ENCODE measurements at regions of chr1 and their contacts with region 1.

Region 1: GRCh38 chr1:39196244-39197215 is 8.0 kb upstream of the MACF1 start:
- DNase-seq: no peak
- ATAC-seq: no peak
- H3K4me3 ChIP-seq: no peak overlapping the region
- H3K27ac ChIP-seq: no peak overlapping the region
- H3K4me1 ChIP-seq: peaks cover 35% of the 10 kb centered on the region
- H3K27me3 ChIP-seq: no peaks in the 10 kb centered on the region
- CTCF ChIP-seq: no peak
- EP300 ChIP-seq: no peak
- POLR2A ChIP-seq: no peak
- RAD21 ChIP-seq: no peak

Region 2: DNA sequence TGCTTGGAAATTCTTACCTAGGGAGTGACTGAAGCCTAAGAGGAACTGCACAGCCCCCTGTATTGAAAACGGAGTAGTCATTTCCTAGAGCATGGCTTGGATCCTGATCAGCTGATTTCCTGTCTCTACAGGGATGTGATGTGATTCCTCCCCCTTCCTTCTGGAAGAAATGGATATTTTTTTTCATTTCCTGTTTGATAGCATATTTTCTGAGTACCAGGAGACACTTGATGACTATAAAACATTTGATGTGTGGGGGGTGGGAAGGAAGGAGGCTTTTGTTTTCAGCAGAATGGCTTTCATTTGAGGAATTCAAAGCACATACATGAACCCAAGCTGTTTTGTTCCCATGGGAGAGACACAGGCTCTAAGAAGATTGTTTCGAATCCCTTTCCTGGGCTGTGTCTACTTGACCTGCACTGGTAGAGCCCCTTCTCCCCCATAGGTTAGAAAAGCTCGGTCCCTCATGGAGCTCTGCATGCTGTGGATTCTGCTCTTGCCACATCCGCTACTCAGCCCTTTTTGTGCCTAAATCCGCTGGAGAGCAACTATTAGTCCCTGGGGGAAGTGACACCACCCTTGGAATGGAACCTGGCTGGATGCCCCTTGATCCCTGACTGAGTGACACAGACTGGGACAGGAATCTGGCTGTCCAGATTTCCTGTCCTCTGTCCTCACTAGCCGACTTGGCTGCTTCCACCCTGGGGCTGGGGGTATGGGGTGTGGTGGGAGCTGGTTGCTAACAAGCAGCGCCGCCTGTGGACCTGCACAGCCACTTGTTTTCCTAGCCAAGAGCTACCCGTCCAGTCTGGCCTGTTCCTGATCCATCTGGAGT is 63.8 kb before region 1 on chr1:
- CTCF ChIA-PET with region 1: no interaction called
- POLR2A ChIA-PET with region 1: no interaction called
- in situ Hi-C with region 1: no loop called
- intact Hi-C with region 1: no loop called
- DNase-seq: peak; percentile 85
- ATAC-seq: peak; percentile 98
- H3K4me3 ChIP-seq: peak overlapping the region in 1 of 3 experiments; percentile 24; a peak in 1 of 6 replicates
- H3K27ac ChIP-seq: peak overlapping the region; percentile 52
- H3K4me1 ChIP-seq: peaks cover 42% of the 10 kb centered on the region
- H3K27me3 ChIP-seq: no peaks in the 10 kb centered on the region
- CTCF ChIP-seq: peak; percentile 86
- EP300 ChIP-seq: no peak
- POLR2A ChIP-seq: no peak
- RAD21 ChIP-seq: peak; percentile 67

Region 3: DNA sequence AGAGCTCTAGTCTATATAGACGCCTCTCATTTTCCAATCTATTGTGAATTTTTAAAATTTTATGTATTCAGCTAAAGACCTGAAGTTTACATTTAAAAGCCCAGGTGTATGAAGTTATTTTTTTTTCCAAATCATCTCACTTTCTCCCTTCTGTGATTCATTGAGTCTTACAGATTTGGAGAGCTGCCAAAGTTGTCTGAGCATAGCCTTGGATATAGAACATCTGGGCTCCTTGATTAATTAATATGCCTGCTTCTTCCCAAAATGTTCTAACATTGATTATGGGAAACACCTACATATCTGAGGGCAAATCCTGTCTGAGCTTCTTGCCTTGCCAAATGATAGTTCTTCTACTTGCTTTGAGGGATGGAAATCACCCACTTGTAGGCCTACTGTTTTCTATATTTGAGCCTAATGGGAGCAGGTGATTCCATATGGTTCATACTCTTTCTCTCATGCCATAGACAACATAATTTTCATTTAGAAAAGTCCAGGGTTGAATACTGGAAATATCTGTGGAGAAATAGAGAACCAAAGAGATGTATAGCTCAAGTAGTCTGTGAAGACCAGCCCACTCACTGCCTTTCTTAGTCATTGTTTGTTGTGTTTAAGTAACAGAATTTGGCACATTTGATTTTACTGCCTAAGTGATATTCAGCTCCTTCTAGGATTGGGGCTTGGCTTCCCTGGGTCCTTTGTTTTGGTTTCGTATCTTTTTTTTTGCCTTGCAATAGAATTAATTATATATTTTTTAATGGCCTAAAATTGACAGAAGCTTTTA is 54.1 kb after region 1 on chr1:
- CTCF ChIA-PET with region 1: no interaction called
- POLR2A ChIA-PET with region 1: no interaction called
- in situ Hi-C with region 1: loop called (anchors 5 kb)
- intact Hi-C with region 1: no loop called
- DNase-seq: no peak
- ATAC-seq: no peak
- H3K4me3 ChIP-seq: no peak overlapping the region
- H3K27ac ChIP-seq: no peak overlapping the region
- H3K4me1 ChIP-seq: no peaks in the 10 kb centered on the region
- H3K27me3 ChIP-seq: no peaks in the 10 kb centered on the region
- CTCF ChIP-seq: no peak
- EP300 ChIP-seq: no peak
- POLR2A ChIP-seq: no peak
- RAD21 ChIP-seq: no peak

Region 4: DNA sequence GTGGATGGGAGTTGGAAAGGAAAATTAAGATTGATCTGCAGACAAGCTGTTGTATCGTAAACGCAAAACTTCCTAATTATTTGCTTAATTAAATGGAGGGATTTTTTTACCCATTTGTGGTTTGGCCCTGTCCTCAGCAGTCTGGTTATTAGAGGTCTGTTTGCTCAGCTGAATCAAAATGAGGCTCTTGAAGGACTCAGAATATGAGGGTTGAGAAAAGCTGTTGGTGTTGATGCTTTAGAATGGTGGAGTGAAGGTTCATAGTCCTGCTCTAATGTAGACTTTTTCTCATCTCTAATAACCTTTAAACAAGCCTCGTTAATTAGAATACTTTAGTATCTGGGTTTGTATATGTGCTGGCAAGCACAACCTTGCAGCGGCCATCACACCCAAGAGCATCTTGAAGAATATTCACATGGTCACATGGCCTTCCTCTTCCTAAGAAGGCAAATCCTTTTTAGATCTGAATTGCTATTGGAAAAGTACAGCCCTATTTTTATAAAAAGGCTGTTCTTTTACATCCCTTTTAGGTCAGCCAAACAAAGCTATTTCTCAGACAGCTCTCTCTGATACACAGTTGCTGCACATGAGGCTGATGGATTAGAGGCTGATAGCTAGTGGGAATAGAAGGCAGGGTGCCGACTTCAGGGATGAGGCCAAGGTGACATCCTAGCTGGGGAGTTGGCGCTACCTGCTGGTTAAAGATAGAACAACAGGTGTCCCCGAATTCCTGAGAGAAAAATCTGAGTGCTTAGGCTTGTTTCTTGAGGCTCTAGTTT is 61.8 kb after region 1 on chr1:
- CTCF ChIA-PET with region 1: interaction called, 29 read pairs
- POLR2A ChIA-PET with region 1: interaction called, 6 read pairs
- in situ Hi-C with region 1: loop called (anchors 5 kb)
- intact Hi-C with region 1: loop called (anchors 1 kb)
- DNase-seq: peak; percentile 65
- ATAC-seq: peak; percentile 80
- H3K4me3 ChIP-seq: no peak overlapping the region
- H3K27ac ChIP-seq: no peak overlapping the region
- H3K4me1 ChIP-seq: no peaks in the 10 kb centered on the region
- H3K27me3 ChIP-seq: no peaks in the 10 kb centered on the region
- CTCF ChIP-seq: peak; percentile 91
- EP300 ChIP-seq: no peak
- POLR2A ChIP-seq: no peak
- RAD21 ChIP-seq: peak; percentile 90